ENCODE measurements at regions of chr16 and their contacts with region 1.

Region 1: GRCh38 chr16:50065624-50066481 is at the start of gene HEATR3:
- DNase-seq: peak; percentile 86 to 96 (median 90)
- ATAC-seq: peak; percentile 93
- H3K4me3 ChIP-seq: peak within 1 kb of the TSS; percentile 91
- H3K4me3 Mint-ChIP-seq: peak within 1 kb of the TSS; percentile 80 to 97 (median 92)
- H3K27ac ChIP-seq: peak within 1 kb of the TSS; percentile 81
- H3K27ac Mint-ChIP-seq: peak within 1 kb of the TSS; percentile 55 to 96 (median 93)
- H3K4me1 ChIP-seq: peaks cover 17 to 18% of the 10 kb centered on the region in 2 donors
- H3K4me1 Mint-ChIP-seq: peaks cover 34 to 49% (median 44%) of the 10 kb centered on the region in 7 donors
- H3K27me3 ChIP-seq: no peaks in the 10 kb centered on the region
- H3K27me3 Mint-ChIP-seq: no peaks in the 10 kb centered on the region
- total RNA-seq, gene HEATR3: 12.5 to 27.5 (median 23.5) TPM

Region 2: GRCh38 chr16:49463529-49463928 is 602.3 kb before region 1 on chr16:
- CTCF ChIA-PET with region 1: no interaction called
- POLR2A ChIA-PET with region 1: no interaction called
- intact Hi-C with region 1: loop called in 1 of 2 experiments (anchors 2 kb)
- DNase-seq: peak; percentile 18 to 94 (median 89)
- ATAC-seq: peak; percentile 86
- H3K4me3 ChIP-seq: peak overlapping the region; percentile 15
- H3K4me3 Mint-ChIP-seq: peak overlapping the region; percentile 64 to 90 (median 79)
- H3K27ac ChIP-seq: peak overlapping the region; percentile 70
- H3K27ac Mint-ChIP-seq: peak overlapping the region; percentile 77 to 99 (median 95)
- H3K4me1 ChIP-seq: peaks cover 27 to 49% of the 10 kb centered on the region in 2 donors
- H3K4me1 Mint-ChIP-seq: peaks cover 12 to 80% (median 67%) of the 10 kb centered on the region in 7 donors
- H3K27me3 ChIP-seq: no peaks in the 10 kb centered on the region
- H3K27me3 Mint-ChIP-seq: peaks cover 0 to 17% (median 0%) of the 10 kb centered on the region in 5 donors

Region 3: GRCh38 chr16:49855280-49855821 is 210.5 kb before region 1 on chr16:
- CTCF ChIA-PET with region 1: no interaction called
- POLR2A ChIA-PET with region 1: no interaction called
- intact Hi-C with region 1: loop called in 1 of 2 experiments (anchors 5 kb)
- DNase-seq: peak; percentile 25 to 60 (median 58)
- ATAC-seq: peak; percentile 76
- H3K4me3 ChIP-seq: no peak overlapping the region
- H3K4me3 Mint-ChIP-seq: peak overlapping the region in 7 of 10 donors; percentile 16 to 90 (median 41)
- H3K27ac ChIP-seq: no peak overlapping the region
- H3K27ac Mint-ChIP-seq: no peak overlapping the region
- H3K4me1 ChIP-seq: peaks cover 0 to 5% of the 10 kb centered on the region in 2 donors
- H3K4me1 Mint-ChIP-seq: peaks cover 0 to 20% (median 11%) of the 10 kb centered on the region in 7 donors
- H3K27me3 ChIP-seq: peaks cover 0 to 4% of the 10 kb centered on the region in 2 donors
- H3K27me3 Mint-ChIP-seq: peaks cover 28 to 67% (median 45%) of the 10 kb centered on the region in 5 donors

Region 4: DNA sequence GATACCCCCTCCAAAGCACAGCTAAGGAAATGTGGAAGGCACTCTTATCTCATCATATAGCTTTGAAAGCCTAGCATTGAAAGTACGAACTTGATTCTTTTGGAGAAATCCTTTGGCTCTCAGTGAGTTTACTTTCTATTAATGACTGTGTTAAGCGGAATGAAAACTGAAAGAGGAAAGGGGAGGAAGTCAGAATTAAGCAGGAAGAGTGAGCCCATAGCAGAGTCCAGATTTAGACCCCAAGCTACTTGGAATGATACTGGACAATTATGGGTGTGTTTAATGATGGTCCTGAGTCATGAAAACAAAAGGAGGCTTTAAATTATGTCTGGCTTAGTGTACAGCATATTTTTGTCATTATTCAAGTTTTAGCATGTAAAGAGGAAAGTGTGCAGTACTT is 129.4 kb after region 1 on chr16:
- CTCF ChIA-PET with region 1: no interaction called
- POLR2A ChIA-PET with region 1: no interaction called
- intact Hi-C with region 1: loop called (anchors 5 kb)
- DNase-seq: no peak
- ATAC-seq: no peak
- H3K4me3 ChIP-seq: no peak overlapping the region
- H3K4me3 Mint-ChIP-seq: peak overlapping the region in 8 of 10 donors; percentile 4 to 71 (median 45)
- H3K27ac ChIP-seq: peak overlapping the region; percentile 3
- H3K27ac Mint-ChIP-seq: peak overlapping the region; percentile 11 to 87 (median 56)
- H3K4me1 ChIP-seq: peaks cover 18 to 25% of the 10 kb centered on the region in 2 donors
- H3K4me1 Mint-ChIP-seq: peaks cover 46 to 86% (median 75%) of the 10 kb centered on the region in 7 donors
- H3K27me3 ChIP-seq: no peaks in the 10 kb centered on the region
- H3K27me3 Mint-ChIP-seq: no peaks in the 10 kb centered on the region

Region 5: DNA sequence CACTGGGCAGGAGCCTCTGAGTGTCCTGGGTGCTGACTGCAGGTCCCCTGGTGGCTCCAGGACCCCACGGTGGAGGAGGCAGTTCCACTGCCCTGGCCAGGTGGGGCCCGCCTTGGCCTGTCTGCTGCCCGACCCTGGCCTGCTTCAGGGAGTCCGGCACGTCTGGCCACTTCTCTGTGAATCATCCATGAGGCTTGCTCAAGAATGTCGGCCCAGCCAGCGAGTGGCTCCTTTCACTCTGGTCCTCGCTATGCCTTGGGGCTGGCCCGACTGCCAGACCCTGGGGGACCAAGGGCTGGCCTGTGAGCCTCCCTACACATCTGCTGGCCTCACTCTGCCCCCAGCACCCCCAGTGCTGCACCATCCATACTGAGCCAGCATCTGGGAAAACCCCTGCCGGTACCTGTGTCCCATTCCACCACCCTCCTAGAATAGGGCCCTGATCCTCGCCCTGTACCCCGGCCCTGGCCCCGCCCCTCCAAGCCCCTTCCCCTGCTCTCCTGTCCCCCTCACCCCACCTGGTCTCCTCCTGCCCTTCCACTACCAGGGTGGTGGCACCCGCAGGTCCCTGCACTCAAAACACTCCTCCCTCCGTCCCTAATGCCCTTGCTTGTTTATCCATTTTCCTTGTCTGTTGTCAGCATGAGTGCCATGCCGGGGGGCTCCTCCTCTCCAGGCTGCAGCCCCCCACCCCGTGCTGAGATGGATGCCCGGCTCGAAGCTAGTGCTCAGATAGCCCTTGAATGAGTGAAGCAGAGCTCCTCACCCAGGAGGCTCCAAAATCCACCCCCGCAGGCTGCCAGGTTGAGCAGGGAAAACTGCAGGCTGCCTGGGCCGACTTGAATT is 236.0 kb after region 1 on chr16:
- CTCF ChIA-PET with region 1: no interaction called
- POLR2A ChIA-PET with region 1: no interaction called
- intact Hi-C with region 1: no loop called
- DNase-seq: peak in 1 of 9 donors; percentile 3
- ATAC-seq: no peak
- H3K4me3 ChIP-seq: no peak overlapping the region
- H3K4me3 Mint-ChIP-seq: no peak overlapping the region
- H3K27ac ChIP-seq: no peak overlapping the region
- H3K27ac Mint-ChIP-seq: peak overlapping the region in 1 of 9 donors; percentile 32
- H3K4me1 ChIP-seq: no peaks in the 10 kb centered on the region
- H3K4me1 Mint-ChIP-seq: peaks cover 0 to 2% (median 0%) of the 10 kb centered on the region in 7 donors
- H3K27me3 ChIP-seq: no peaks in the 10 kb centered on the region
- H3K27me3 Mint-ChIP-seq: no peaks in the 10 kb centered on the region

Region 6: DNA sequence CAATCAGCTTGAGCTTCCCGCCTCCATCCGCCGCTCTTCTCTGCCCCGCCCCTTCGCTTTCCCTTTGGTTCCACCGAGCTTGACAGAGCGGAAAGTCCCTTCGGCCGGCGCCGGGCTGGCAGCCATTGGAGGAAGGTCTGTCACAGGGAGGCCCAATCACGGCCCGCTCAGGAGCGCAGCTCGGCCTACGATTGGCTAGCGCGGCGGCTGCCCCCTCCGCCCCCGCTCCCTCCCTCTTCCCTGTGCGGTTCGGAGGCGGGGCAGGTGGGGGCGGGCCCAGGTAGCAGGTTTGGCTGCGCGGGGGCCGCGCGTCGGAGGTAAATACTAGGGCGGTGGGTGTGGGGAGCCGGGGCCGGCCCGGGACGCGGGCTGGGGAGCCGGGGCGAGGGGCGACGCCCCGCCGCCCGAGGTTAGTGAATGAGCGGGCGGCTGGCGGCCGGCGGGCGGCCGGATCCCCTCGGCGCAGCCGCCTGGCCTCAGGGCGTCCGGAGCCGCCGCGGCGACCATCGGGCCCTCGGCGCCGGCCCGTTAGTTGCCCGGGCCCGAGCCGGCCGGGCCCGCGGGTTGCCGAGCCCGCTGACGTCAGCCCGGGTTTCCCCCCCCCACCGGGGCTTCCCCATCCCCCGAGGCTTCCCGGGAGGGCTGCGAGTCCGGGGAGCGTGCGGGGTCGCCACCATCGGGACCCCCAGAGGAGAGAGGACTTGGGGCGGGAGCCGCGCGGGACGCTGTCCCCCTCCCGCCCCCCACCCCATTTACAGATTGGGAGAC is 676.1 kb after region 1 on chr16 and contains the start of gene CYLD:
- CTCF ChIA-PET with region 1: no interaction called
- POLR2A ChIA-PET with region 1: no interaction called
- intact Hi-C with region 1: loop called (anchors 1 to 5 kb)
- DNase-seq: peak; percentile 95 to 100 (median 100)
- ATAC-seq: peak; percentile 94
- H3K4me3 ChIP-seq: peak within 1 kb of the TSS; percentile 70
- H3K4me3 Mint-ChIP-seq: peak within 1 kb of the TSS; percentile 90 to 100 (median 96)
- H3K27ac ChIP-seq: peak within 1 kb of the TSS; percentile 100
- H3K27ac Mint-ChIP-seq: peak within 1 kb of the TSS; percentile 94 to 99 (median 98)
- H3K4me1 ChIP-seq: peaks cover 7 to 38% of the 10 kb centered on the region in 2 donors
- H3K4me1 Mint-ChIP-seq: peaks cover 28 to 52% (median 40%) of the 10 kb centered on the region in 7 donors
- H3K27me3 ChIP-seq: no peaks in the 10 kb centered on the region
- H3K27me3 Mint-ChIP-seq: no peaks in the 10 kb centered on the region
- total RNA-seq, gene CYLD: 259 to 393 (median 336) TPM

Measured in naive thymus-derived CD4-positive, alpha-beta T cell (primary cell).